OCI-LY7 (cell line): ENCODE measurements at regions of chr7 and their contacts with region 1.

Region 1: DNA sequence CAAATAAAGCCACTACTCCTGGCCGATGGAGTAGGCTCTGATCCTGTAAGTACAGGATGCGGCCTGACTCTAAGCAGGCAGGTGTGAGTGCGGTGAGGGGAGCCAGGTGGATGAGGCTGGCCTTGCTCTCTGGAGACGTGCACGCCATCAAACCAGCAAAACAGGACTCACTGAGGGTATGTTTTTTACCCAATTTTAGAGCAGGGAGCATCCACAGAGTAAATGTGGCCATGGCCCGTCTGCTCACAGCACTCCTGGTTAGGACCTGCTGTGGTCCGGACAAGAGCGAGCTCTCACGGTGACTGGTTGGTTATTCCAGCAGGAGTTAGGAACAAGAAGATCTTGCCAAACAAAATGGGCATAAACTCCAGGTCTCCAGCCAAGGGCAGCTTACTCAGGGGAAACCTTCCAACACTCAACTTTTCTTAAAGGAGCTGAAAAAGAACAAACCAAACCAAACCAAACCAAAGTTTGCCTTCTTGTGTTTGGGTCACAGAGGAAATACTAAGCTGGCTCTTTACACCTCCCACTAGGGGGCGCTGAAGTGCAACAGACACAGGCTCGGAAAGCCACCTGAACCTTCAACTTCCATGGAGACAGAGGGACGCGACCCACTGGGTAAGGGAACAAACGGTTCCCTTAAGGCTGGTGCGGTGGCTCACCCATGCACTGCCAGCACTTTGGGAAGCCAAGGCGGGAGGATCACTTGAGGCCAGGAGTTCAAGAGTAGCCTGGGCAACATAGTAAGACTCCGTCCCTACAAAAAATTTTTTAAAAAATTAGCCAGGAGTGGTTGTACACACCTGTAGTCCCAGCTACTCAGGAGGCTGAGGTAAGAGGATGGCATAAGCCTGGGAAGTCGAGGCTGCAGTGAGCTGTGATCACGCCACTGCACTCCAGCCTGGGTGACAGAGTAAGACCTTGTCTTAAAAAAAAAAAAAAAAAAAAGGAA is 122.4 kb downstream of the CLEC2L start:
- DNase-seq: peak; percentile 82
- H3K4me3 ChIP-seq: no peak overlapping the region
- H3K27ac ChIP-seq: no peak overlapping the region
- H3K4me1 ChIP-seq: peaks cover 15% of the 10 kb centered on the region
- CTCF ChIP-seq: peak; percentile 94

Region 2: GRCh38 chr7:139777948-139778841 is 132.3 kb after region 1 on chr7 and contains the start of gene HIPK2:
- CTCF ChIA-PET with region 1: no interaction called
- POLR2A ChIA-PET with region 1: no interaction called
- intact Hi-C with region 1: loop called (anchors 2 kb)
- DNase-seq: peak; percentile 80
- H3K4me3 ChIP-seq: peak within 1 kb of the TSS; percentile 82
- H3K27ac ChIP-seq: peak within 1 kb of the TSS; percentile 0
- H3K4me1 ChIP-seq: peaks cover 23% of the 10 kb centered on the region
- CTCF ChIP-seq: no peak
- total RNA-seq, gene HIPK2: 5.9 and 6.2 TPM in 2 replicates